ENCODE measurements at regions of chr2 and their contacts with region 1.

Region 1: GRCh38 chr2:223093436-223094241 is 41.6 kb downstream of the KCNE4 start:
- DNase-seq: no peak
- H3K4me3 ChIP-seq: no peak overlapping the region
- H3K27ac ChIP-seq: no peak overlapping the region
- H3K4me1 ChIP-seq: peaks cover 0 to 10% (median 4%) of the 10 kb centered on the region in 4 donors
- H3K27me3 ChIP-seq: no peaks in the 10 kb centered on the region
- CTCF ChIP-seq: no peak
- EP300 ChIP-seq: no peak
- POLR2A ChIP-seq: no peak

Region 2: GRCh38 chr2:222760301-222760897 is 333.2 kb before region 1 on chr2:
- in situ Hi-C with region 1: no loop called
- intact Hi-C with region 1: no loop called
- DNase-seq: no peak
- H3K4me3 ChIP-seq: no peak overlapping the region
- H3K27ac ChIP-seq: no peak overlapping the region
- H3K4me1 ChIP-seq: no peaks in the 10 kb centered on the region
- H3K27me3 ChIP-seq: no peaks in the 10 kb centered on the region
- CTCF ChIP-seq: no peak
- EP300 ChIP-seq: no peak
- POLR2A ChIP-seq: no peak

Region 3: DNA sequence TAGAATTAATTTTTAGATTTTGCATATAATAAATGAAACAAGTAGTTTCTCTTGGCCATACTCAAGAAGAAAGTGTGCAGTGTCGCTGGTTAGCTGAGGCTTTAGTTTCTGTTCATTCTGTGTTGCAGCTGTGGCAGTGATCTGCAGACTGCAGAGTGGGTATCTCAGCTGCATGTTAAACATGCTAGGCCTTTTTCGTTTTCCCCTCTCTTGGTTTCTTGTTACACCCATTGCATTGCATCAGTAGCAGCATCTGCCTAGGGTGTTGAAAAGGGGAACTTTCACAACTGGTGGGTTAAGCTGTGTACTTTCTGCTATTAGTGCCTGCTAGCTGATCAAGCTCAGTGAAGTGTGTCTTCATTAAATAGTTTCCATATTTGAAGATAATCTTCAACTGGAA is 181.5 kb before region 1 on chr2:
- in situ Hi-C with region 1: no loop called
- intact Hi-C with region 1: no loop called
- DNase-seq: no peak
- H3K4me3 ChIP-seq: no peak overlapping the region
- H3K27ac ChIP-seq: peak overlapping the region in 1 of 4 donors; percentile 1
- H3K4me1 ChIP-seq: peaks cover 0 to 25% (median 3%) of the 10 kb centered on the region in 4 donors
- H3K27me3 ChIP-seq: no peaks in the 10 kb centered on the region
- CTCF ChIP-seq: no peak
- EP300 ChIP-seq: no peak
- POLR2A ChIP-seq: no peak

Region 4: DNA sequence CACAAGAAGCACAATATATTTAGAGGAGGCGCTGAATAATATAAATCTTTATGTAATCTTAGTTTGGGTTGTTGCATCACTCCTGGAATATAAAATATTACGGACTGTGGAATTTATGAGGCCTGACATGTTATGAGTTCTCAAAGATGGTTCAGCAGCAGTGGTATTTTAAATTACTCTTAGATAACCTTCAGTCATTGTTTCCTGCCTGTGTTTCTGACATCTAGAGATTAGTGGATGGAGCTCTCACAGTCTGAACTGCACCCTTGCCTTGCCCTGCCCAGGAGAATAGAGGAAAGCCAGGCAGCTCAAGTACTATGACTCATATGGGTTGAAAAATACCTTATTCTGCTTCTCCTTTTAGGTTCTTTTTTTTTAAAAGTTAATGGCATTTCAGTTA is 162.8 kb before region 1 on chr2:
- in situ Hi-C with region 1: no loop called
- intact Hi-C with region 1: no loop called
- DNase-seq: no peak
- H3K4me3 ChIP-seq: no peak overlapping the region
- H3K27ac ChIP-seq: no peak overlapping the region
- H3K4me1 ChIP-seq: no peaks in the 10 kb centered on the region
- H3K27me3 ChIP-seq: no peaks in the 10 kb centered on the region
- CTCF ChIP-seq: no peak
- EP300 ChIP-seq: no peak
- POLR2A ChIP-seq: no peak

Region 5: GRCh38 chr2:222982010-222982908 is 111.4 kb before region 1 on chr2:
- in situ Hi-C with region 1: no loop called
- intact Hi-C with region 1: loop called (anchors 10 kb)
- DNase-seq: peak; percentile 18
- H3K4me3 ChIP-seq: no peak overlapping the region
- H3K27ac ChIP-seq: no peak overlapping the region
- H3K4me1 ChIP-seq: peaks cover 0 to 7% (median 2%) of the 10 kb centered on the region in 4 donors
- H3K27me3 ChIP-seq: no peaks in the 10 kb centered on the region
- CTCF ChIP-seq: peak; percentile 25 to 44 (median 34)
- EP300 ChIP-seq: no peak
- POLR2A ChIP-seq: no peak

Region 6: GRCh38 chr2:223060201-223060825 is 33.3 kb before region 1 on chr2:
- in situ Hi-C with region 1: no loop called
- intact Hi-C with region 1: loop called (anchors 1 kb)
- DNase-seq: no peak
- H3K4me3 ChIP-seq: no peak overlapping the region
- H3K27ac ChIP-seq: no peak overlapping the region
- H3K4me1 ChIP-seq: peaks cover 0 to 17% (median 6%) of the 10 kb centered on the region in 4 donors
- H3K27me3 ChIP-seq: no peaks in the 10 kb centered on the region
- CTCF ChIP-seq: no peak
- EP300 ChIP-seq: no peak
- POLR2A ChIP-seq: no peak